ENCODE measurements at regions of chr2 and their contacts with region 1.

Region 1: GRCh38 chr2:181891966-181892798 is 652 bp downstream of the ITPRID2 start:
- DNase-seq: peak; percentile 68 to 78
- H3K4me3 ChIP-seq: peak overlapping the region; percentile 83
- H3K4me3 Mint-ChIP-seq: peak overlapping the region; percentile 93
- H3K27ac Mint-ChIP-seq: peak overlapping the region; percentile 91
- H3K4me1 ChIP-seq: peaks cover 33% of the 10 kb centered on the region
- H3K4me1 Mint-ChIP-seq: peaks cover 15% of the 10 kb centered on the region
- H3K27me3 ChIP-seq: no peaks in the 10 kb centered on the region
- H3K27me3 Mint-ChIP-seq: no peaks in the 10 kb centered on the region
- CTCF ChIP-seq: peak; percentile 4 to 34

Region 2: DNA sequence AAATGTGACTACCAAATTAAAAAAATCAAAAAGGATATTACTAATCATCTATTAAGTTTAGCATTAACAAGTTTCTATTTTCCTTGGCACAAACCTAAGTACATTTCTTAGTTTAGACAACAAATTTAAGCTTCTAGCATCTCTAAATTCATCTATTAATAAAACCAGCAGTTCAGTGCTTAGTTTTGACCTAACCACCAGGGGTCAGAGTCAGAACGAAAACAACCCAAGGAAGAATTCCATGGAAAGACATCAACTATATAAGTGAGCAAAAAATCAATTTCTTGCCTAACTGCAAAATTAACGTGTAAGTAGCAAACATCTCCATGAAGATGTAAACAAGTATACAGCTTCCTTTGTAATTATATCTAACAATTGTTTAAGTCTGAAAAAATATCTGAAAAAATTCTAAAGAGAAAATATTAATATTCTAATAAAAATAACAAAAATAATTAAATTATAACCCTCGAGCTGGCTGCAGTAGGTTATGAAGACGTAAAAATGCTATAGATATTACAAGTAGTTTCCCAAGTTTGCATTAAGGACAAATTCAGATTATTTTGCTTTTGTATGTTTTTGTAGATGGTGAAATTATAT is 318.9 kb before region 1 on chr2:
- CTCF ChIA-PET with region 1: no interaction called
- POLR2A ChIA-PET with region 1: no interaction called
- intact Hi-C with region 1: loop called (anchors 10 kb)
- DNase-seq: peak in 1 of 2 experiments; percentile 49
- H3K4me3 ChIP-seq: no peak overlapping the region
- H3K4me3 Mint-ChIP-seq: no peak overlapping the region
- H3K27ac Mint-ChIP-seq: no peak overlapping the region
- H3K4me1 ChIP-seq: no peaks in the 10 kb centered on the region
- H3K4me1 Mint-ChIP-seq: no peaks in the 10 kb centered on the region
- H3K27me3 ChIP-seq: no peaks in the 10 kb centered on the region
- H3K27me3 Mint-ChIP-seq: peaks cover 4% of the 10 kb centered on the region
- CTCF ChIP-seq: peak in 1 of 2 experiments; percentile 63

Region 3: DNA sequence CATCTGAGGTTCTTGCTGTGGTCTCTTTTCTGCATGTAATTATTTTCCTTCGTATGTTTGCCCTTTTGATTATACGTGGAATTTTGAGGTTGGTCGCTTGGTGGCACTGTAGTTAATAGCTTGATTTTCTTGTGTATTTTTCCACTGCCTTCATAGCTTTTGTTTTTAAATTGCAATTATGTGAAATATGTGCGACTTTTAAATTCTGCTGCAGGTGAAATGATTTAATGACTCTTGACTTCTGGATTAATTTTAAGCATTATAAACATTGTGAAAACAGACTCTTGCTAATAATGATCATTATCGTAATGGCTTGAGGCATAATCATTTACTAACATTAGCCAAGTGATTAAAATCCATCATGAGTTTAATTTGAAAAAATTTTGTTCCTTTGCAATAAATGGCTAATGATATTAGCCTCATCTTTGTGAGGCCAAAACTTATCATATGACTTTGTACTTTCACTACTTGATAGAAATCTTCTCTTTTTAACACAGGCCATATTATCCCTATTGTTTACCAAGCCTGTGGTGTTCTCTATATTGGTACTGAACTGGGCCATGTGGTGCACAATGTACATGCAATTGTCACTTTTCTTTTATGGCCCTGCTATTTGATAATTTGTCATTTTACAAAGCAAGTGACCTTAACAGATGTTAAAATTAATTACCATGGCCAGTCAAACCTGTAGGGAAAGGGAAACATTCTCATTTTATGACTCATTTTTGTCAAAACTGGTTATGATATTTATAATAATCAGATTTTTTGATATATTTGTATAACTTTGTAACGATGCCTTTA is 149.1 kb before region 1 on chr2:
- CTCF ChIA-PET with region 1: interaction called, 6 read pairs
- POLR2A ChIA-PET with region 1: no interaction called
- intact Hi-C with region 1: loop called (anchors 2 kb)
- DNase-seq: peak in 1 of 2 experiments; percentile 46
- H3K4me3 ChIP-seq: no peak overlapping the region
- H3K4me3 Mint-ChIP-seq: no peak overlapping the region
- H3K27ac Mint-ChIP-seq: no peak overlapping the region
- H3K4me1 ChIP-seq: no peaks in the 10 kb centered on the region
- H3K4me1 Mint-ChIP-seq: no peaks in the 10 kb centered on the region
- H3K27me3 ChIP-seq: no peaks in the 10 kb centered on the region
- H3K27me3 Mint-ChIP-seq: no peaks in the 10 kb centered on the region
- CTCF ChIP-seq: peak; percentile 57 to 63

Region 4: DNA sequence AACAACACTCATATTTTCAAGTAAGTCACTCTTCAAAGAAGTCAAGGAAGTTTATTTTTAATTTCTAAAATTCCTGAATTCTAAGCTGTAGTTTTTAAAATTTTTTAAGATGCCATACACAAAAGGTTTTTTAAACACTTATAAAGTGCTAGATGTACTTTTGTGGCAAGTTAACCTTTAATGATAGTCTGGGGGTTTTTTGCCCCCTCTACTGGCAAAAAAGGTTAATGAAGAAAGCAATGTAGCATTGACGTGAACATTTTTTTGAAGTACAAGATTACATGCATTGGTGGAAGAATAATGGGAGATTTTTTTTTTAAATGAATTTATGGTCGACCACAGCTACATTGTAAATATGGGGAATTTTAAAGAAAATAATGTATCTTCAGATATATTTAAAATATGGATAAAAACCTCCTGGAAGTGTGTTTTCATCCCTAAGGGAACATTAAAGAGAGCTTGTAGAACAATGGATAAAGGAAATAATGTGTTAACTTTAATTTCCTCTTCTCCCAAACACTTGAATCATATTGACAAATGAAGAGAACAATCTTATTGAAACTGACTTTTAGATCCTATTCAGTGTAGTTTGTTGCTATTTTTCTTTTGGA is 11.9 kb after region 1 on chr2:
- CTCF ChIA-PET with region 1: no interaction called
- POLR2A ChIA-PET with region 1: no interaction called
- intact Hi-C with region 1: loop called (anchors 1 kb)
- DNase-seq: peak in 1 of 2 experiments; percentile 52
- H3K4me3 ChIP-seq: no peak overlapping the region
- H3K4me3 Mint-ChIP-seq: no peak overlapping the region
- H3K27ac Mint-ChIP-seq: no peak overlapping the region
- H3K4me1 ChIP-seq: no peaks in the 10 kb centered on the region
- H3K4me1 Mint-ChIP-seq: no peaks in the 10 kb centered on the region
- H3K27me3 ChIP-seq: no peaks in the 10 kb centered on the region
- H3K27me3 Mint-ChIP-seq: no peaks in the 10 kb centered on the region
- CTCF ChIP-seq: peak; percentile 58 to 66

Region 5: GRCh38 chr2:181943375-181944124 is 51.4 kb after region 1 on chr2:
- CTCF ChIA-PET with region 1: no interaction called
- POLR2A ChIA-PET with region 1: no interaction called
- intact Hi-C with region 1: loop called (anchors 5 kb)
- DNase-seq: peak in 1 of 2 experiments; percentile 54
- H3K4me3 ChIP-seq: no peak overlapping the region
- H3K4me3 Mint-ChIP-seq: no peak overlapping the region
- H3K27ac Mint-ChIP-seq: peak overlapping the region; percentile 90
- H3K4me1 ChIP-seq: peaks cover 62% of the 10 kb centered on the region
- H3K4me1 Mint-ChIP-seq: peaks cover 40% of the 10 kb centered on the region
- H3K27me3 ChIP-seq: no peaks in the 10 kb centered on the region
- H3K27me3 Mint-ChIP-seq: no peaks in the 10 kb centered on the region
- CTCF ChIP-seq: no peak

Region 6: GRCh38 chr2:182359990-182360662 is 467.9 kb after region 1 on chr2:
- CTCF ChIA-PET with region 1: no interaction called
- POLR2A ChIA-PET with region 1: no interaction called
- intact Hi-C with region 1: no loop called
- DNase-seq: no peak
- H3K4me3 ChIP-seq: no peak overlapping the region
- H3K4me3 Mint-ChIP-seq: no peak overlapping the region
- H3K27ac Mint-ChIP-seq: no peak overlapping the region
- H3K4me1 ChIP-seq: no peaks in the 10 kb centered on the region
- H3K4me1 Mint-ChIP-seq: no peaks in the 10 kb centered on the region
- H3K27me3 ChIP-seq: peaks cover 1% of the 10 kb centered on the region; the same call in 1 of the 2 replicates
- H3K27me3 Mint-ChIP-seq: peaks cover 3% of the 10 kb centered on the region
- CTCF ChIP-seq: no peak